B cell (primary cell): ENCODE measurements at regions of chr11 and their contacts with region 1.

Region 1: GRCh38 chr11:59668950-59669610 is at the start of gene PATL1:
- DNase-seq: peak; percentile 100
- ATAC-seq: peak; percentile 89
- H3K4me3 ChIP-seq: peak within 1 kb of the TSS; percentile 81 to 96 (median 93)
- H3K4me3 Mint-ChIP-seq: peak within 1 kb of the TSS; percentile 98
- H3K27ac ChIP-seq: peak within 1 kb of the TSS; percentile 98 to 100
- H3K27ac Mint-ChIP-seq: peak within 1 kb of the TSS; percentile 100
- H3K4me1 ChIP-seq: peaks cover 20% of the 10 kb centered on the region in 2 donors
- H3K4me1 Mint-ChIP-seq: peaks cover 33% of the 10 kb centered on the region
- H3K27me3 ChIP-seq: no peaks in the 10 kb centered on the region
- H3K27me3 Mint-ChIP-seq: no peaks in the 10 kb centered on the region
- CTCF ChIP-seq: peak; percentile 0
- total RNA-seq, gene PATL1: 45.0 and 46.0 TPM in 2 replicates

Region 2: DNA sequence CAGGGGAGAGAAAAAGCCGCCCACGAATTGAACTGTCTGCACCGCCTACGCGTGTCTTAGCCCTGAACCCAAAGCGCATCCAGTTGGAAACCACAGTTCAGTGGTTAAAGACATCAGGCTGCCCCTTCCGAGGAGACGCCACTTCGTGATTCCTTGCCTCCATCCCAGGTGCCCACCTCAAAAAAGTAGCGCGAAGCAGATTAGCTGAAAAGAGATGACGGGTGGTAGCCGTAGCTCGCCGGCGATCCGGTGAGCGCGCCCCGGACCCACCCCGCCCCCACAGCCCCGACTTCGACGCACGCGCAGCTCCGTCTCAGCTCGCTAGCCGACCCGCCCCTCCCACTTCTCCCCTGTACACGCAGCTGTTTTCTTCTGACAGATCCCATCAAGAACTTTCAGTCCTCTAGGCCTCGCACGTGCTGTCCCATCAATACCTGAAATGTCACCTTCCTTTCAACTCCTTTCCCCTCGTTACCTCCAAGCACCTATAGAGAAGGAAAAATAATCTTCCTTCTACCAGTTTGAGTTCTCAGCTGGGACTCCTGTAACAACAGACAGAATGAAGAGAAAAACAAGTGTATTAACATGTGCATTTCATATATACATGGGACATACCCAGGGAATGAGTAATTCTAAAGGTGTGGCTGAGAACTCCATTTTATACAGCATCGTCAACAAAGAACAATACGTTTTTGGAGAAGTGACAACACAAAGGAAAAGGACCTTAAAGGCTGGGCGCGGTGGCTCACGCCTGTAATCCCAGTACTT is 108.2 kb before region 1 on chr11:
- CTCF ChIA-PET with region 1: interaction called, 4 read pairs
- POLR2A ChIA-PET with region 1: interaction called, 6 read pairs
- intact Hi-C with region 1: loop called (anchors 2 kb)
- DNase-seq: peak; percentile 92
- ATAC-seq: peak; percentile 79
- H3K4me3 ChIP-seq: peak overlapping the region; percentile 84 to 98 (median 92)
- H3K4me3 Mint-ChIP-seq: peak overlapping the region; percentile 95
- H3K27ac ChIP-seq: peak overlapping the region; percentile 72 to 84
- H3K27ac Mint-ChIP-seq: peak overlapping the region; percentile 98
- H3K4me1 ChIP-seq: peaks cover 22 to 49% of the 10 kb centered on the region in 2 donors
- H3K4me1 Mint-ChIP-seq: peaks cover 44% of the 10 kb centered on the region
- H3K27me3 ChIP-seq: peaks cover 0 to 3% (median 1%) of the 10 kb centered on the region in 4 experiments
- H3K27me3 Mint-ChIP-seq: no peaks in the 10 kb centered on the region
- CTCF ChIP-seq: no peak